Activated T-helper 1 cell treated with anti-CD3 and anti-CD28 coated beads, Interleukin-12 subunit alpha, Interleukin-12 subunit beta, Interleukin-2, Interleukin-4 antibody, amounts not matched to agents 30 ng/mL and 10 ng/mL and 1 ng/mL, durations not matched to agents 14 hours and 24 hours and 36 hours (primary cell): ENCODE measurements at regions of chr6 and their contacts with region 1.

Region 1: DNA sequence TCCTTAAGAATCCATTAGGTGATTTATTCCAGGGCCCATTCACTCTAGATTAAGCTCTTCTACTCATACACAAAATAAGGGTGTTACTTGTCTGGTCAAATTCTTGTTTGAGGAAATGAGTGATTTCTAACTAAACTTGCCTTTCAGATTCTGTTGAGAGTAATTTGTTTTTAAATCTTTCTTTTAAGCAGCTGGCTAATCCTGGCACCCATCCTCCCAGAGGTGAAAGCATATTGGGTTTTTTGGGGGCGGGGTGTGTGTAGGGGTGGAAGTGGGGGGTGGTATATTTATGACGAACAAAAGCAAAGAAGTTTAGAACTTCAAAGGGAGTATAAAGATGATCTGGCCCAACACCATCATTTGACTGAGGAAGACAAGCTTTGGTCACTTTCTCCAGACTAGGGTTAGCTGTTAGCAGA is 94.7 kb downstream of the RTN4IP1 start:
- DNase-seq: no peak
- H3K4me3 Mint-ChIP-seq: peak overlapping the region; percentile 10
- H3K27ac Mint-ChIP-seq: peak overlapping the region; percentile 74
- H3K4me1 Mint-ChIP-seq: peaks cover 66% of the 10 kb centered on the region
- H3K27me3 Mint-ChIP-seq: no peaks in the 10 kb centered on the region

Region 2: GRCh38 chr6:106556368-106556960 is 21.9 kb after region 1 on chr6:
- intact Hi-C with region 1: loop called (anchors 1 kb)
- DNase-seq: no peak
- H3K4me3 Mint-ChIP-seq: no peak overlapping the region
- H3K27ac Mint-ChIP-seq: no peak overlapping the region
- H3K4me1 Mint-ChIP-seq: peaks cover 23% of the 10 kb centered on the region
- H3K27me3 Mint-ChIP-seq: no peaks in the 10 kb centered on the region